ENCODE measurements at regions of chr1 and their contacts with region 1.

Region 1: DNA sequence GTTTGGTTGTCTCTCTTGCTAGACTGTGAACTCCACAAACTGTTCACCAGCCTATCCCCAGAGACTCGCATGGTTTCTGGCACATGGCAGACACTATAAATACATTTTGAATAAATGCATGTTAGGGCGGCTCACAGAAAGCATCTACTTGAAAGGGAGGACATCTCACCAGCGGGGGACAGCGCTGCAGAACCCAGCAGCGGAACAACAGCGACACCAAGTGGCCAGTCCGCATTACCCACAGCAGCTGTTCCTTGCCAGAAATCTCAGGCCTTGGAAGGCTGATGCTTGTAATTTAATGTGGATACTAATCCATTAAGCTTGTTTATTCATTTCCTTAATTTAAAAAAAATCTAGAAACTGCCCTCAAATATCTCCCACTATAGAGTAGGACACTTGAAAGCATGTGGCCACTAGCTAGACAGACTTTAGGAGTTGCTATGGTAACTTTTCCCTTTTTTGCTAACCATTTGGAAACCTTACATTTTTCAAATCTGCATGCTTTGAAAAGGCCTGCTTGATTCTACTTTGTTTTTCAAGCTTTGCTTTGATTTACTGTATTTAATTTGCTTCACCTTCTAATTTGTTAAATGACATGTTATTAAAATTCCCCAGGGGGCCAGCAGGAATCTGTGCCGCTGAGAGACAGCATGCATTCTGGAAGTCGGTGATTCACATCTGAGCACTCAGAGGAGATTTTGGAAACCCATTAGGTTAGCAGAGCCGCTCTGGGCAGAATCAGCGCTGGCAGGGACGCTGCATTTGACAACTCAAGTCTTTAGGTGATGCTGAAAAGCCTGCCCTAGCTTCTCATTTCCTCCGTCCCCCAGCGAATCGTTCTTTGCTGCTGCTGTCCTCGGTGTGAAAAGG is 63.5 kb upstream of the SSX2IP start:
- DNase-seq: peak; percentile 82
- ATAC-seq: peak; percentile 89
- H3K4me3 ChIP-seq: no peak overlapping the region
- H3K27ac ChIP-seq: no peak overlapping the region
- H3K4me1 ChIP-seq: 0 out of 2 replicates have a peak, but pooled peaks cover 4% of the 10 kb centered on the region
- H3K27me3 ChIP-seq: no peaks in the 10 kb centered on the region
- CTCF ChIP-seq: peak; percentile 97

Region 2: GRCh38 chr1:84442256-84442655 is 311.5 kb before region 1 on chr1:
- CTCF ChIA-PET with region 1: interaction called, 4 read pairs
- POLR2A ChIA-PET with region 1: no interaction called
- intact Hi-C with region 1: loop called (anchors 1 kb)
- DNase-seq: peak; percentile 93
- ATAC-seq: peak; percentile 93
- H3K4me3 ChIP-seq: no peak overlapping the region
- H3K27ac ChIP-seq: peak overlapping the region; percentile 57
- H3K4me1 ChIP-seq: peaks cover 12% of the 10 kb centered on the region
- H3K27me3 ChIP-seq: no peaks in the 10 kb centered on the region
- CTCF ChIP-seq: peak; percentile 84

Region 3: DNA sequence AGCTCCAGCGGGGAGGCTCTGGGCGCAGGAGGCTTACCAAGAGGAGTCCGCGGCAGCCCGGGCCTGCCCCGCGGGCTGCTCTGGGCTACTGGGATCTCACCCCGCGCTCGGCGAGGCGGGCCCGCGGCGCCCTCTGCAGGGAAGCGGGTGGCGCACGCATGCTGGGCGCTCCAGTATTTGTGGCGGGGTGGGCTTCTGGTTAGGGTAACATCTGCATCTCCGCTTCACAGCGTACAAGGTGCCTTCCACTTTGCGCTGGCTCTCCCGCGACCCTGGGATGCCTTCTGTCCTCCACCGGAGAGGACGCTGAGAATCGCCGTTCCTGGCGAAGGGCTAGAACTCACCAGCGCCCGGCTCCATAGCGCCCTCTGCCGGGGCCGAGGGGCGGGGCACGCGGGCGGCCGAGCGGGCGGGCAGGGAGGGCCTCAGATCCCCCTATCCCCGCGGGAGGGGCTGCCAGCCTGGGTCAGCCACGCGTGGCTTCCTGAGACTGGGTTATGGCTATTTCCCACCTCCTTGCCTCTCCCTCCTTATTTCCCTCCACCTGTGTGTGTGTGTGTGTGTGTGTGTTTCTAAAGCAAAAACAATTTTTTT is 132.9 kb before region 1 on chr1:
- CTCF ChIA-PET with region 1: no interaction called
- POLR2A ChIA-PET with region 1: no interaction called
- intact Hi-C with region 1: loop called (anchors 1 kb)
- DNase-seq: peak; percentile 84
- ATAC-seq: peak; percentile 83
- H3K4me3 ChIP-seq: peak overlapping the region; percentile 81
- H3K27ac ChIP-seq: peak overlapping the region; percentile 84
- H3K4me1 ChIP-seq: peaks cover 24% of the 10 kb centered on the region
- H3K27me3 ChIP-seq: no peaks in the 10 kb centered on the region
- CTCF ChIP-seq: peak; percentile 98

Region 4: GRCh38 chr1:84668185-84668584 is 85.6 kb before region 1 on chr1:
- CTCF ChIA-PET with region 1: interaction called, 6 read pairs
- POLR2A ChIA-PET with region 1: no interaction called
- intact Hi-C with region 1: loop called (anchors 1 kb)
- DNase-seq: peak; percentile 28
- ATAC-seq: peak; percentile 66; the same call in 1 of the 2 replicates
- H3K4me3 ChIP-seq: no peak overlapping the region
- H3K27ac ChIP-seq: no peak overlapping the region
- H3K4me1 ChIP-seq: 0 out of 2 replicates have a peak, but pooled peaks cover 6% of the 10 kb centered on the region
- H3K27me3 ChIP-seq: no peaks in the 10 kb centered on the region
- CTCF ChIP-seq: peak; percentile 62

Region 5: GRCh38 chr1:84682047-84682446 is 71.7 kb before region 1 on chr1:
- CTCF ChIA-PET with region 1: no interaction called
- POLR2A ChIA-PET with region 1: no interaction called
- intact Hi-C with region 1: no loop called
- DNase-seq: no peak
- ATAC-seq: no peak
- H3K4me3 ChIP-seq: no peak overlapping the region
- H3K27ac ChIP-seq: no peak overlapping the region
- H3K4me1 ChIP-seq: peaks cover 2% of the 10 kb centered on the region; the same call in 1 of the 2 replicates
- H3K27me3 ChIP-seq: no peaks in the 10 kb centered on the region
- CTCF ChIP-seq: no peak

Region 6: DNA sequence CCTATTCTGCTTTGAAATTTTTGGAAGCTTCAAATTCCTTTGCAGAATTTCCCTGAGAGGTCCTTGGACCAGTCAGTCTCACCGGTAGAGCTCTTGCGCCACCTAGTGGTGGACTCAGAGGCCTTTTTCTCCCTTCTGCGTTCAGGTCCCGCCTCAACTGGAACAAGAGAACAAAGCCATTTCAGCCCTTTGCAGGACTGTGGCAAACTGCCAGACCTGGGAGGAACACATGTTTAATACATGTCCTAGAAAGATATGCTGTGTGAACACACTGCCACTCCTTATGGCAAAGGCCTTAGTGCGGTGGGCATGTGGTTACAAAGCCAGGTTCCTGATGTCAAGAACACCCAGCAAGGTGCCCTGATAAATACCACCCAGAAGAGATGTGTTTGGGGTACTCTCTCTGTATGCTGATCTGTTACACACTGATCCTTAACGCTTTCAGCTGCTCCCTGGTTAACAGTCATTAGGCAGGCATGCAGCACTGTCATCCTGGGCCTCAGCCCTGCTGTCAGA is 18.7 kb after region 1 on chr1:
- CTCF ChIA-PET with region 1: interaction called, 3 read pairs
- POLR2A ChIA-PET with region 1: no interaction called
- intact Hi-C with region 1: loop called (anchors 2 kb)
- DNase-seq: peak; percentile 92
- ATAC-seq: peak; percentile 31
- H3K4me3 ChIP-seq: no peak overlapping the region
- H3K27ac ChIP-seq: peak overlapping the region; percentile 99
- H3K4me1 ChIP-seq: peaks cover 49% of the 10 kb centered on the region
- H3K27me3 ChIP-seq: no peaks in the 10 kb centered on the region
- CTCF ChIP-seq: peak; percentile 93

Region 7: GRCh38 chr1:84785271-84786036 is 31.7 kb after region 1 on chr1:
- CTCF ChIA-PET with region 1: no interaction called
- POLR2A ChIA-PET with region 1: no interaction called
- intact Hi-C with region 1: no loop called
- DNase-seq: no peak
- ATAC-seq: no peak
- H3K4me3 ChIP-seq: no peak overlapping the region
- H3K27ac ChIP-seq: no peak overlapping the region
- H3K4me1 ChIP-seq: peaks cover 6% of the 10 kb centered on the region
- H3K27me3 ChIP-seq: no peaks in the 10 kb centered on the region
- CTCF ChIP-seq: no peak